Vagina (tissue), 2 donors: ENCODE measurements at regions of chr17 and their contacts with region 1.

Region 1: GRCh38 chr17:2025622-2026310 is 632 bp upstream of the RTN4RL1 start:
- DNase-seq: no peak
- H3K4me3 ChIP-seq: peak overlapping the region; percentile 60 to 64
- H3K27ac ChIP-seq: peak overlapping the region; percentile 80
- H3K4me1 ChIP-seq: peaks cover 42% of the 10 kb centered on the region
- H3K27me3 ChIP-seq: no peaks in the 10 kb centered on the region
- CTCF ChIP-seq: peak; percentile 30 to 60 (median 57)
- POLR2A ChIP-seq: no peak

Region 2: DNA sequence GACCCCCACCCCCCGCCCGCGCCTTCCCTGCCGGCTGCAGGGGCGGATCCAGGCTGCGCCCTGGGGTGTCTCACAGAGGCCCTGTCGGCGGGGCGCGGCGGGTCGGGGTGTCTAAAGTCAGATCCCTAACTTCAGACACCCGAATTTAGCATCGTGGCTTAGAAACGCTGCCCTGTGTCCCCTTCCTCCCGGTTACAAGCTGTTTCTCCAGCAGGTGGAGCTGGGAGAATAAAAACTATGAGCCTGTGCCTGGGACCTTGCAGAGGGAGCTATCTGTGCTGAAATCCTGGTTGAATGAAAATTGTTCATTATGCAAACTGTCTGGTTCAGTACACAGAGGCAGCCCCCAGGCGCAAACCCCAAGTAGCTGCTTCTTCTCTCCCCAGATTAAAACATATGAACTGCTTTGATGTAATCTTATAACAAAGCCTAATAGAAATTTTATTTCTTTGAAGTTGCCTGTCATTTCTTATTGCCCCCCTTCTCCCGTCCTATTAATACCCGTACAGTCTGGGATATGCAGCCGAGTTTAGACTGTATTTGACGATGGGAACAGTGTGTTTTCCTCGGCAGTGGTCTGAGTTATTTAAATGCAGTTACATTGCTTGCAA is 117.0 kb before region 1 on chr17:
- intact Hi-C with region 1: loop called (anchors 1 kb)
- DNase-seq: no peak
- H3K4me3 ChIP-seq: peak overlapping the region; percentile 14 to 19
- H3K27ac ChIP-seq: no peak overlapping the region
- H3K4me1 ChIP-seq: peaks cover 15% of the 10 kb centered on the region
- H3K27me3 ChIP-seq: no peaks in the 10 kb centered on the region
- CTCF ChIP-seq: peak; percentile 29 to 84 (median 44)
- POLR2A ChIP-seq: no peak

Region 3: DNA sequence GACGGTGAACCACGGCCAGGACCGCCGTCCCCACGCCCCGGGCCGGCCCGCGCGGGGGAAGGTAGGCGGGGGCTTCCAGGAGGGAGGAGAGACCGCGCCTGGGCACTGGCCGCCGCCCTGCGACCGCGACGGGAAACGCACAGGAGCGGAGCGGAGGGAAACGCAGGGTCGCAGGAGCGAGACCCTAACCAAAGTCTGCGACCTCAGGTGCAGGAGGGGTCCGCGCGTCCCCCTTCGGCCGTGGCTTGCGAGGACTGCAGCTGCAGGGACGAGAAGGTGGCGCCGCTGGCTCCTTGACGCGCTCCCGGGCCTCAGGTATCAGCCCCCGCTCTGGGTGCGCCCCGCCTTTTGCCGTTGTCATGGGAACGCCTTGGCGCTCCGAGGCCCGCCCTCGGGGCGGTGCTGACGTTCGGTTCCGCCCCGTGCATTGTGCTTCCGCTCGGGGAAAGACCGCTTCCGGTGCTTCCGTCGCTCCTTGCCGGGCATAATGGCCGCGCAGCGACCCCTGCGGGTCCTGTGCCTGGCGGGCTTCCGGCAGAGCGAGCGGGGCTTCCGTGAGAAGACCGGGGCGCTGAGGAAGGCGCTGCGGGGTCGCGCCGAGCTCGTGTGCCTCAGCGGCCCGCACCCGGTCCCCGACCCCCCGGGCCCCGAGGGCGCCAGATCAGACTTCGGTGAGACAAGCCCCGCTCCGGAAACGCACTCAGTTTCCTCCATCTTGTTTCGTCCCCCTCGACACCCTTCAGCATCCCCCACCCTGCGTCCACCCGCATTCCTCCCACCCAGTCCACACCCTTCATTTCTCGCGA is 16.0 kb after region 1 on chr17 and contains the start of gene OVCA2:
- intact Hi-C with region 1: no loop called
- DNase-seq: no peak
- H3K4me3 ChIP-seq: peak within 1 kb of the TSS; percentile 60 to 92
- H3K27ac ChIP-seq: peak within 1 kb of the TSS; percentile 83
- H3K4me1 ChIP-seq: peaks cover 19% of the 10 kb centered on the region
- H3K27me3 ChIP-seq: no peaks in the 10 kb centered on the region
- CTCF ChIP-seq: peak; percentile 30 to 54 (median 31)
- POLR2A ChIP-seq: peak in 1 of 2 donors; percentile 39
- total RNA-seq, gene OVCA2: 24.3 TPM